Thyroid gland (tissue), 4 donors: ENCODE measurements at regions of chr1 and their contacts with region 1.

Region 1: DNA sequence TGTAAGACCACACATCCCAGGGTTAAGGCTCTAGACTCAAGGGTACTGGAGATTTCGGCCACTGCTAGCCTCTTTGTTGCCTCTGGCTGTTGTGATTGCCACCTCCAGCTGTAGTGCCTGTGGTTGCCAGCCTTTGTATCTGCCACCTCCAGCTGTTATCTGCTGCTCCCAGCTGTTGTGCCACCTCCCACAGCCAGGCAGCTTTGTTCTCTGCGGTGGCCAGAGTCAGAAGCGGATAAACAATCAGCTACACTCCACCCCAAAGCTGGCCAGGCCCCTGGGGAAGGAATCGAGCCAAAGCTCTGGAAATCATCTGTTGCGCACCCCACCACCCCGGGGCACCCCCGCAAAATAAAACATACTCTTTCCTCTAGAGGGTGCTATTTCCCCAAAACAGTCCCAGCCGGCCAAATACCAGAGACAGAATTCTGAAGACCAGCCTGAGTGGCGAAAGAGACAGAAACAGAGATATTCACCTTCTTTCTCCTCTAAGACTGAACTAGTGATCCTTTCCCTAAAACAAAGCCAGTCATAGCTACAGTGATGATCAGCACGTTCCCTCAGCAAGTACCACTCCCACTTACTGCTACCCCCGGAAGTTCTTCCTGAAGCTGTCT is 14.8 kb upstream of the PIGM start:
- DNase-seq: peak; percentile 37 to 43
- H3K4me3 ChIP-seq: no peak overlapping the region
- H3K27ac ChIP-seq: no peak overlapping the region
- H3K4me1 ChIP-seq: peaks cover 0 to 10% of the 10 kb centered on the region in 2 donors
- H3K27me3 ChIP-seq: no peaks in the 10 kb centered on the region
- CTCF ChIP-seq: peak in 5 of 6 experiments; percentile 22 to 76 (median 63)
- POLR2A ChIP-seq: no peak

Region 2: GRCh38 chr1:160083968-160084770 is 37.6 kb after region 1 on chr1:
- intact Hi-C with region 1: loop called (anchors 5 kb)
- DNase-seq: peak; percentile 90
- H3K4me3 ChIP-seq: no peak overlapping the region
- H3K27ac ChIP-seq: no peak overlapping the region
- H3K4me1 ChIP-seq: peaks cover 0 to 10% of the 10 kb centered on the region in 2 donors
- H3K27me3 ChIP-seq: no peaks in the 10 kb centered on the region
- CTCF ChIP-seq: peak; percentile 53 to 85 (median 75)
- POLR2A ChIP-seq: no peak